Posterior cingulate gyrus (tissue), 11 donors: ENCODE measurements at regions of chr1 and their contacts with region 1.

Region 1: DNA sequence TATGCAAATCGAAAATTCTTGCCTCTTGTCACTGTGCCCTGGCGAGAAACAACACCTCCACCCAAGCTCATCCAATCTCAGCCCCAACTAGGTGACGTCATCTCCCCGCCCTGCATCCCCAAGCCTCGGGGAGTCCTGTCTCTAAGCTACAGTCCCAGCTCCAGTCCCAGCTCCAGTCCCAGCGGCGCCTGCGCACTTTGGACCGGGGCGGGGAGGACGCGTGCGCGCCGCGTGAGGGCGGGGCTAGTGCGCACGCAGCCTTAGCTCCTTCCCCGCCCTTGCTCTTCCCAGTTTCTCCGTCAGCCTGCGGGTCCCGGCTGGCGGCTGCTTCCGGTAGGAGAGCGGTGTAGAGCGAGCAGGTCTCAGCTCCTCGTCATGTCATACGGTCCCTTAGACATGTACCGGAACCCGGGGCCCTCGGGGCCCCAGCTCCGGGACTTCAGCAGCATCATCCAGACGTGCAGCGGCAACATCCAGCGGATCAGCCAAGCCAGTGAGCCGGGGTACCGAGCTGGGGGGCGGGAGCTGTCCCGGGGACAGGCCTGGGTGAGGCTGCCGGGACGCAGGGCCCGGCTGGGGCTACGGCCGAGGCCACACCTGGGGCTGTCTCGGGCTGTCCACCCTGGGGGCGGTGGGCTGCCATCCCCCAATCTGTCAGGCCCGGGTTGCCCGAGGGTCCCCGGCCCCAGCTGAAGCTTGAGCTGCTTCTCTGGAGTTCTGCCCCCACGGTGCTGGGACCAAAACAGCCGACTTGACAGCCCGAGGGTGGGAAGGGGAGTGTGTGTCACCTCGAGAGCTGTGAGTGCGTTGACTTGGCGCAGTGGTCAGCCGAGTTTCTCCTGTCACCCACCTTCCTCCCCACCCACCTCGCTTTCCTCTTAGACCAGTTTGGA is at the start of gene STX12:
- DNase-seq: peak; percentile 94 to 99 (median 97)

Region 2: GRCh38 chr1:27725374-27726173 is 47.6 kb before region 1 on chr1 and contains the start of gene FAM76A:
- intact Hi-C with region 1: loop called (anchors 1 kb)
- DNase-seq: peak; percentile 99 to 100 (median 100)

Region 3: GRCh38 chr1:27830621-27831424 is 57.6 kb after region 1 on chr1 and contains the start of gene PPP1R8:
- intact Hi-C with region 1: loop called (anchors 2 kb)
- DNase-seq: peak; percentile 91 to 99 (median 94)

Region 4: GRCh38 chr1:27915082-27915598 is 142.0 kb after region 1 on chr1:
- intact Hi-C with region 1: no loop called
- DNase-seq: no peak